ENCODE measurements at regions of chr18 and their contacts with region 1.

Region 1: GRCh38 chr18:48293954-48294898 is 115.0 kb downstream of the ZBTB7C start:
- DNase-seq: no peak
- ATAC-seq: peak in 5 of 8 donors; percentile 37 to 51 (median 48)
- H3K4me3 ChIP-seq: no peak overlapping the region
- H3K27ac ChIP-seq: no peak overlapping the region
- H3K4me1 ChIP-seq: peaks cover 0 to 14% (median 0%) of the 10 kb centered on the region in 9 donors
- H3K27me3 ChIP-seq: no peaks in the 10 kb centered on the region
- CTCF ChIP-seq: no peak

Region 2: GRCh38 chr18:46859855-46860254 is 1434.4 kb before region 1 on chr18:
- intact Hi-C with region 1: loop called in 1 of 10 experiments (anchors 5 kb)
- DNase-seq: no peak
- ATAC-seq: peak in 1 of 8 donors; percentile 12
- H3K4me3 ChIP-seq: no peak overlapping the region
- H3K27ac ChIP-seq: no peak overlapping the region
- H3K4me1 ChIP-seq: peaks cover 0 to 11% (median 0%) of the 10 kb centered on the region in 9 donors
- H3K27me3 ChIP-seq: no peaks in the 10 kb centered on the region
- CTCF ChIP-seq: no peak

Region 3: DNA sequence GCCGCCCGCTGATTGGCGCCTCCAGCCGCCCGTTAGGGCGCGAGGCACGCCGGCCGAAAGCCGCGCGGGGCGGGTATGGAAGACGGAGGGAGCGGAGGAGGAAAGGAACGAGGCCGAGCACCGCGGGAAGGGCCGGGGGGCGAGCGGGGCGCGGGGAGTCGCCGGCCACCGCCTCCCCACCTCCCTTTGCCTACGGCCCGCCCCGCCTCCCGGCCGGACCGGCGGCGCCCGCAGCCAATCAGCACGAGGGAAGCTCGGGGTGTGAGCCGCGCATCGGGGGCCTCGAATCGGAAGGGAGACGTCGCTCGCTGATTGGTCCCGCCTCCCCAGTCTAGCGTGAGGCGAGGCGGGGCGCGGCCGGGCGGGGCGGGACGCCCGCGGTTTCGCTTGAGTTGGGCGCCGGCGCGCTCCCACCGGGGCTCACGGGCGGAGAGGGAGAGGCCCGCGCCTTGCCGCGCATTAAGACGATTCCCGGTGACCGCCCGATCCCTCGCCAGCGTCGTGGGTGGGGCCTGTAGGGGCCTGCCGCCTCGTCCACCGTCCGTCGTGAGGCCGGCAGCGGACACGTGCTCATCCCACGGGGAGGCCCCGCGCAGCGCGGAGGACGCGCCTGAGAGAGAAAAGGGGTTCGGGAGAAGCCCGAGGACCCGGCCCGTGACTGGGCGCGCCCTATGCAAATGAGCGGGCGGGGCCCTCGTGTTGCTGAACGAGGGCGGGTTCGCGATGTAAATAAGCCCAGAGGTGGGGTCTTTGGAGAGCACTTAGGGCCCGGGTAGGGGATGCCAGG is 363.1 kb before region 1 on chr18:
- intact Hi-C with region 1: no loop called
- DNase-seq: peak; percentile 97
- ATAC-seq: peak; percentile 92 to 97 (median 94)
- H3K4me3 ChIP-seq: peak overlapping the region; percentile 36 to 93 (median 87)
- H3K27ac ChIP-seq: peak overlapping the region; percentile 89 to 99 (median 98)
- H3K4me1 ChIP-seq: peaks cover 0 to 48% (median 40%) of the 10 kb centered on the region in 9 donors
- H3K27me3 ChIP-seq: no peaks in the 10 kb centered on the region
- CTCF ChIP-seq: no peak

Measured in heart right ventricle (tissue), 16 donors.